ENCODE measurements at regions of chr17 and their contacts with region 1.

Region 1: DNA sequence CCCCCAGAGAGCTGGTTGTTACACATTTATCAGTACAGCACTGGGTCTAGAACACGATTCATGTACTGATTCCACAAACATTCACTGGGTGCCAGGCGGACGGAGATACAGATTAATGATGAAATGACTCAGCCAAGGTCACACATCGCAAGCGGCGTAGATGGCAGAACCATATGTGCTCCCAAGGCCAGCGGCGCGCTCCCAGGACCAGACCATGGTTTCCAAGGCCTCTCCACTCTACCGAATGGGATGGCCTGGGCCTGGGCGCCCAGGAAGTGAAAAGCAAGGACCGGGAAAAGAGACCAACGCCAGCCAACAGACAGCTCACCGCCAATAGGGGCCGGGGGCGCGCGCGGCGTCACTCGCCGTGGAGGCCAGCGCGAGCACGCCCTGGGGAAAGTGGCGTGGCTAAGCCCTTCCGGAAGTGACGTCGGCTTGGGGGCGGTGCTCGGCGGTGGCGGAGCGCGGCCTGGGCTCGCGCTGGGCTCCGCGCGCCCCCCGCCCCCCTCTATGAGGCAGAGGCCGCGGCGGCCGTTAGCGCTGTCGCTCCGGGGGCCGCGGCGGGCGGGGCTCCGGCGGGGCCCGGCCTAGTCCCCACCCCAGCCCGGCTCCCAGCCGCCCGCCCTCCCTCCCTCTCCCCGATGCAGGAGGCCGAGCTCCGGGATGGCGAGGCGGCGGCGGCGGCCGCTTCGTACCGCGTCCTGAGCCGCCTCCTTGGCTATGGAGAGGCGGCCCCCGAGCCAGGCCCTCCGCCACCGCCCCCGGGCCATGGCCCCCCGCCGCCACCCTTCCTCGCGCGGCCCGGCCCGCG is at the start of gene SOCS7:
- DNase-seq: peak; percentile 89 to 97
- ATAC-seq: peak; percentile 90 to 93
- H3K4me3 ChIP-seq: peak within 1 kb of the TSS; percentile 95
- H3K27ac ChIP-seq: peak within 1 kb of the TSS; percentile 96 to 99
- H3K4me1 ChIP-seq: peaks cover 24% of the 10 kb centered on the region
- CTCF ChIP-seq: no peak
- EP300 ChIP-seq: no peak
- POLR2A ChIP-seq: peak; percentile 96
- RAD21 ChIP-seq: no peak
- polyA plus RNA-seq, gene SOCS7: 20.6 and 27.7 TPM in 2 replicates

Region 2: DNA sequence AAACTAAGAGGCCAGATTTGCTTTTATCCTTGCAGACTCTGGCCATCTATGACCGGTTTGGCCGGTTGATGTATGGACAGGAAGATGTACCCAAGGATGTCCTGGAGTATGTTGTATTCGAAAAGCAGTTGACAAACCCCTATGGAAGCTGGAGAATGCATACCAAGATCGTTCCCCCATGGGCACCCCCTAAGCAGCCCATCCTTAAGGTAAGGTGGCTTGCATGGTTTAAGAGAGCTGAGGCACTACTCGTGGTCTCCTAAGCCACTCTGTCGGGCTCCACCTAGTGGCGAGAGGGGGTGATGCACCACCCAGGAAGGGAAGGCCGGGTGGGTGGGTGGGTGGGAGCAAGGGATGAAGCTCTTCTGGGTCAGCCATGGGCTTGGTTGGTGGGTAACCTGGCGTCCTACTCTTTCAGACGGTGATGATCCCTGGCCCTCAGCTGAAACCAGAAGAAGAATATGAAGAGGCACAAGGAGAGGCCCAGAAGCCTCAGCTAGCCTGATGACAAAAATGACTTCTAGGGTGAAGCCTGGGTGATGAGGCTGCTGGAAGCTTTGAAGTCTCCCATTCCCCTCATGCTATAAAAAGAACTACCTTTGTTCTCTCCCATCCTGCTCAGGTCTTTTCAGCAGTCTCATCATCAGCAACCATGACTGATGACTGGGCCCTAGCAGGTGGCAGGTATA is 29.4 kb before region 1 on chr17:
- CTCF ChIA-PET with region 1: interaction called, 675 read pairs
- POLR2A ChIA-PET with region 1: interaction called, 7 read pairs
- DNase-seq: peak; percentile 68 to 88
- ATAC-seq: peak; percentile 90 to 92
- H3K4me3 ChIP-seq: no peak overlapping the region
- H3K27ac ChIP-seq: no peak overlapping the region
- H3K4me1 ChIP-seq: peaks cover 7% of the 10 kb centered on the region; the same call in 1 of the 3 replicates
- CTCF ChIP-seq: peak; percentile 75
- EP300 ChIP-seq: no peak
- POLR2A ChIP-seq: no peak
- RAD21 ChIP-seq: peak; percentile 36 to 41

Region 3: GRCh38 chr17:38397227-38397626 is 45.6 kb after region 1 on chr17:
- CTCF ChIA-PET with region 1: interaction called, 47 read pairs
- POLR2A ChIA-PET with region 1: interaction called, 3 read pairs
- DNase-seq: no peak
- ATAC-seq: no peak
- H3K4me3 ChIP-seq: no peak overlapping the region
- H3K27ac ChIP-seq: no peak overlapping the region
- H3K4me1 ChIP-seq: no peaks in the 10 kb centered on the region
- CTCF ChIP-seq: no peak
- EP300 ChIP-seq: no peak
- POLR2A ChIP-seq: no peak
- RAD21 ChIP-seq: no peak

Region 4: GRCh38 chr17:38410201-38410600 is 58.6 kb after region 1 on chr17:
- CTCF ChIA-PET with region 1: interaction called, 203 read pairs
- POLR2A ChIA-PET with region 1: interaction called, 31 read pairs
- DNase-seq: no peak
- ATAC-seq: no peak
- H3K4me3 ChIP-seq: no peak overlapping the region
- H3K27ac ChIP-seq: no peak overlapping the region
- H3K4me1 ChIP-seq: peaks cover 9% of the 10 kb centered on the region
- CTCF ChIP-seq: no peak
- EP300 ChIP-seq: no peak
- POLR2A ChIP-seq: no peak
- RAD21 ChIP-seq: no peak

Region 5: GRCh38 chr17:38421171-38421841 is 69.7 kb after region 1 on chr17:
- CTCF ChIA-PET with region 1: interaction called, 203 read pairs
- POLR2A ChIA-PET with region 1: no interaction called
- DNase-seq: no peak
- ATAC-seq: no peak
- H3K4me3 ChIP-seq: no peak overlapping the region
- H3K27ac ChIP-seq: no peak overlapping the region
- H3K4me1 ChIP-seq: no peaks in the 10 kb centered on the region
- CTCF ChIP-seq: no peak
- EP300 ChIP-seq: no peak
- POLR2A ChIP-seq: no peak
- RAD21 ChIP-seq: no peak

Region 6: DNA sequence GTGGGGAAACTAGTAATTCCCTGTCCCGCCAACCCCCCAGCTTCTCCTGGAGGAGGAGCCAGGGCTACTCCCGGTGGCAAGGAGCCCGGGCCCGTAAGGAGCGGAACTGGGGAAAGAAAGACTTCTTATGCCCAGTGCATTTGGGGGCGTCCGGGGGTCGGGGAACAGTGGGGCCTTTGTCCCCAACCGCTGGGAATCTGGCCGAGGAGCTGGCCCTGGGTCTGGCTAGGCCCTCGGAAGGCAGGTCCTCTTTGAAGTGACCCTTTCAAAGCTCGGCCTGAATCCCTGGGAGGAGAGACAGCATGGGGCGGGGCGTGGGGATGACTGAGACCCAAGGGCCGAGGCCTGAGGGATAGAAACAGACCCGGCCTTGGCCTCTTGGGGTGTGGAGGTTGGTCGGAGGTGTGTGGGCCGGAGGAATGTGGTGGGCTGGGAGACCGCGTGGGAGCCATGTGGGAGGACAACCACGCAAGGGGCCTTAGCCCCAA is 82.6 kb after region 1 on chr17:
- CTCF ChIA-PET with region 1: interaction called, 15 read pairs
- POLR2A ChIA-PET with region 1: no interaction called
- DNase-seq: no peak
- ATAC-seq: no peak
- H3K4me3 ChIP-seq: no peak overlapping the region
- H3K27ac ChIP-seq: no peak overlapping the region
- H3K4me1 ChIP-seq: peaks cover 18% of the 10 kb centered on the region
- CTCF ChIP-seq: no peak
- EP300 ChIP-seq: no peak
- POLR2A ChIP-seq: no peak
- RAD21 ChIP-seq: no peak

Measured in A549 (cell line).